H1 (cell line): ENCODE measurements at regions of chr9 and their contacts with region 1.

Region 1: GRCh38 chr9:121718082-121718856 is 66.8 kb downstream of the DAB2IP start:
- DNase-seq: no peak
- H3K4me3 ChIP-seq: no peak overlapping the region
- H3K27ac ChIP-seq: no peak overlapping the region
- H3K4me1 ChIP-seq: peaks cover 8 to 33% (median 18%) of the 10 kb centered on the region in 4 experiments
- H3K27me3 ChIP-seq: no peaks in the 10 kb centered on the region
- CTCF ChIP-seq: no peak
- EP300 ChIP-seq: no peak
- POLR2A ChIP-seq: no peak
- RAD21 ChIP-seq: no peak

Region 2: GRCh38 chr9:121692606-121693387 is 25.5 kb before region 1 on chr9:
- CTCF ChIA-PET with region 1: interaction called, 24 read pairs
- POLR2A ChIA-PET with region 1: interaction called, 3 read pairs
- DNase-seq: no peak
- H3K4me3 ChIP-seq: no peak overlapping the region
- H3K27ac ChIP-seq: no peak overlapping the region
- H3K4me1 ChIP-seq: peaks cover 2 to 8% (median 5%) of the 10 kb centered on the region in 4 experiments; a peak in 6 of 7 replicates
- H3K27me3 ChIP-seq: no peaks in the 10 kb centered on the region; a peak in 3 of 7 replicates
- CTCF ChIP-seq: no peak
- EP300 ChIP-seq: no peak
- POLR2A ChIP-seq: no peak
- RAD21 ChIP-seq: no peak

Region 3: DNA sequence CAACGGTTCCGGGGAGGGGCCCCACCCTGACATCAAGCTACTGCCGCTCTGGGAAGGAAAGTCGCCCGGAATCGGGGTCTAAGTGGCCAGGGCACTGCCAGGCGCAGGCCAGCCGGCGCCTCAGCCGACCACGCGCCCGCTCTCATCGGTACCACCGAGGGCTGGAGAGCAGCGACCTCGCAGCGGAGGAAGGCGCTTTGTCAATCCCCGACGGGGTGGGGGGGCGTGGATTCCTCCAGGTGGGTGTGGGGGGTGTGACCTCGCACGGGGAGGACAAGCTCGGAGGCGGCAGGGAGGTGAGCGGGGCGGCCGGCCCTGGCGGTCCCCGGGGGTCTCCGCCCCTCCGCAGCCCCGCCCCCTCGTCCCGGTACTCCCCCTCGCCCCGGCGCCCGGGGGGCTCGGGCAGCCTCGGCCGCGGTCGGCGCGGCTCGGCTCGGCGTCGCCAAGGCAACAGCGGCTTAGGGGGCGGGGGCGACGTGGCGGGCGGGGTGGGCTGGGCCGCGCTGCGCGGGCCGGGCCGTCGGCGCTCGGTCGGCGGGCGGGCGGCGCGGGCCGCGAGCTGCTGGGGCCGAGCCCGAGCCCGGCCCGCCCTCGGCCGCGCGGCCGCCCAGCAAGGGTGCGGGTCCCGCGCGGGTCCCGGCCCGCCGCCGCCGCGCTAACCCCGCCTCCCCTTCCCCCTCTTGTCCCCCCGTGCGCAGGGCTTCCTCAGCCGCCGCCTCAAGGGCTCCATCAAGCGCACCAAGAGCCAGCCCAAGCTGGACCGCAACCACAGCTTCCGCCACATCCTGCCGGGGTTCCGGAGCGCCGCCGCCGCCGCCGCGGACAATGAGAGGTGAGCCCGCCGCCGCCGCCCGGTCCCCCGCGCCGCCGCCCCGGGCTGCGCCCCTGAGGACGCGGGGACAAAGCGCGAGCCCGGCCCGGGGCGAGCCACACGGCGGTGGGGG is 19.4 kb before region 1 on chr9:
- CTCF ChIA-PET with region 1: interaction called, 24 read pairs
- POLR2A ChIA-PET with region 1: interaction called, 3 read pairs
- DNase-seq: peak in 1 of 2 experiments; percentile 86
- H3K4me3 ChIP-seq: peak overlapping the region; percentile 54 to 68 (median 61)
- H3K27ac ChIP-seq: no peak overlapping the region
- H3K4me1 ChIP-seq: peaks cover 4 to 13% (median 12%) of the 10 kb centered on the region in 4 experiments
- H3K27me3 ChIP-seq: peaks cover 0 to 5% (median 0%) of the 10 kb centered on the region in 4 experiments; a peak in 4 of 7 replicates
- CTCF ChIP-seq: no peak
- EP300 ChIP-seq: no peak
- POLR2A ChIP-seq: no peak
- RAD21 ChIP-seq: no peak